GM18951 (cell line): ENCODE measurements at regions of chr1 and their contacts with region 1.

Region 1: GRCh38 chr1:229661022-229661877 is 35.2 kb downstream of the URB2 start:
- POLR2A ChIP-seq: no peak

Region 2: DNA sequence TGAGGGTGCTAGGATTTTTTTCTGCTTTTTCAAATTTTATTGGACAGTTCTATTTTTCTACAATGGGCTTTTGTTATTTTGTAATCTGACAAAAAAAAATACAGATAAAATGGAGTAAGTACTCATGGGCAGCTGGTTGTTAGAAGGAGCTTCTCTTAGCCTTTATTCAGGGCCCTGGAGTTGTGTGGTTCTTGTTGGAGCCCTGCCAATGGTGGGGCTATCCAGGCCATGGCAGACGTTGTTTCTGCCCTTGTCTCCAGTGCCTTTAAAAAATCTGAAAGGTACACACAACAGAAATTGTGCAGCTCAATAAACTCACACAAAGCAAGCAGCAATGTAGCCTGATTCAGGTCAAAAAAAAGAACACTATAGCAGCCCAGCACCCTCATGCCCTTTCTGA is 252.2 kb after region 1 on chr1:
- in situ Hi-C with region 1: no loop called
- POLR2A ChIP-seq: no peak

Region 3: GRCh38 chr1:230327892-230328284 is 666.6 kb after region 1 on chr1:
- in situ Hi-C with region 1: loop called (anchors 10 kb)
- POLR2A ChIP-seq: no peak